T-cell (primary cell): ENCODE measurements at regions of chrX and their contacts with region 1.

Region 1: DNA sequence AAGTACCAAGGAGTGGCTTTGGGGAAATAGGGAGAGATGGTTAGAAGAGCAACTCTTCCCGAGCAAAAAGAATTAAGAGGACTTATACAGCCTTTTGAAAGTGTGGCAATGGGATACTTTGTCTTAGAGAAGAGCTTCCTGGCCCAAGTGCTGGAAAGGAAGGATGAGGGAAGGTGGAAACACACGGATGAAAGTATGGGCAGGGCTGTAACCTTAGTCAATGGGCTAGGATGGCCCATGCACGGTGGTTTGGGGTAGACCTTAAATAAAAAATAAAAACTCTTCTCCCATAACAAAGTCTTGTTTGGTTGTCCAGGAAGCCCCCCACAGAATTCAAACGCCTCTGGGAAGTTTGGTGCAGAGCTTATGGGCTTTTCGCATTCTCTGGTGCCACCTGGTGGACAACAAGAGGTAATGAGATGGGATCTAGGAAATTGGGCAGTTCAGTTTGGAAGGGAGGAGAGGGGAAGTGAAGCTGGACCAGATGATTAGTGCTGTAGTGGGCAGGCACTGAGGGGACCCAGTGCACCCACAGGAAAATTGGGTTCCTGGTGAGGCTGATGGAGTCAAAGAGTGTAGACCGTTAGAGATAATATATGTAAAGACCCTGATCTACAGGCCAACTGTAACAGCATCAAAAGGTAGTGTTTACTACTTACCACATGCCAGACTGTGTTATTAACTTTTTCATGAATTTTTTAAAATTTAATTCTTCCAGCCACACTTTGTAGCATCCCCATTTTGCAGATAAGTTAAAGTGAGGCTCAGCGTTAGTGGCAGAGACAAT is 13.8 kb upstream of the ENOX2 start:
- DNase-seq: peak in 30 of 35 experiments; percentile 2 to 75 (median 19)
- ATAC-seq: peak in 2 of 4 experiments; percentile 48 to 59
- H3K4me3 ChIP-seq: no peak overlapping the region
- H3K4me3 Mint-ChIP-seq: no peak overlapping the region
- H3K27ac ChIP-seq: no peak overlapping the region
- H3K27ac Mint-ChIP-seq: no peak overlapping the region
- H3K4me1 ChIP-seq: no peaks in the 10 kb centered on the region
- H3K4me1 Mint-ChIP-seq: no peaks in the 10 kb centered on the region
- H3K27me3 ChIP-seq: peaks cover 0 to 3% of the 10 kb centered on the region in 2 experiments
- H3K27me3 Mint-ChIP-seq: peaks cover 4 to 24% of the 10 kb centered on the region in 2 donors

Region 2: GRCh38 chrX:130575831-130576389 is 340.9 kb before region 1 on chrX:
- CTCF ChIA-PET with region 1: interaction called, 4 to 14 read pairs
- POLR2A ChIA-PET with region 1: no interaction called
- DNase-seq: peak in 14 of 35 experiments; percentile 0 to 27 (median 2)
- ATAC-seq: no peak
- H3K4me3 ChIP-seq: no peak overlapping the region
- H3K4me3 Mint-ChIP-seq: no peak overlapping the region
- H3K27ac ChIP-seq: no peak overlapping the region
- H3K27ac Mint-ChIP-seq: no peak overlapping the region
- H3K4me1 ChIP-seq: no peaks in the 10 kb centered on the region
- H3K4me1 Mint-ChIP-seq: no peaks in the 10 kb centered on the region
- H3K27me3 ChIP-seq: no peaks in the 10 kb centered on the region
- H3K27me3 Mint-ChIP-seq: peaks cover 9 to 25% of the 10 kb centered on the region in 2 donors

Region 3: GRCh38 chrX:130778773-130779172 is 138.1 kb before region 1 on chrX:
- CTCF ChIA-PET with region 1: no interaction called
- POLR2A ChIA-PET with region 1: no interaction called
- DNase-seq: no peak
- ATAC-seq: no peak
- H3K4me3 ChIP-seq: no peak overlapping the region
- H3K4me3 Mint-ChIP-seq: no peak overlapping the region
- H3K27ac ChIP-seq: no peak overlapping the region
- H3K27ac Mint-ChIP-seq: no peak overlapping the region
- H3K4me1 ChIP-seq: no peaks in the 10 kb centered on the region
- H3K4me1 Mint-ChIP-seq: no peaks in the 10 kb centered on the region
- H3K27me3 ChIP-seq: no peaks in the 10 kb centered on the region
- H3K27me3 Mint-ChIP-seq: peaks cover 0 to 4% of the 10 kb centered on the region in 2 donors